ENCODE measurements at regions of chr9 and their contacts with region 1.

Region 1: DNA sequence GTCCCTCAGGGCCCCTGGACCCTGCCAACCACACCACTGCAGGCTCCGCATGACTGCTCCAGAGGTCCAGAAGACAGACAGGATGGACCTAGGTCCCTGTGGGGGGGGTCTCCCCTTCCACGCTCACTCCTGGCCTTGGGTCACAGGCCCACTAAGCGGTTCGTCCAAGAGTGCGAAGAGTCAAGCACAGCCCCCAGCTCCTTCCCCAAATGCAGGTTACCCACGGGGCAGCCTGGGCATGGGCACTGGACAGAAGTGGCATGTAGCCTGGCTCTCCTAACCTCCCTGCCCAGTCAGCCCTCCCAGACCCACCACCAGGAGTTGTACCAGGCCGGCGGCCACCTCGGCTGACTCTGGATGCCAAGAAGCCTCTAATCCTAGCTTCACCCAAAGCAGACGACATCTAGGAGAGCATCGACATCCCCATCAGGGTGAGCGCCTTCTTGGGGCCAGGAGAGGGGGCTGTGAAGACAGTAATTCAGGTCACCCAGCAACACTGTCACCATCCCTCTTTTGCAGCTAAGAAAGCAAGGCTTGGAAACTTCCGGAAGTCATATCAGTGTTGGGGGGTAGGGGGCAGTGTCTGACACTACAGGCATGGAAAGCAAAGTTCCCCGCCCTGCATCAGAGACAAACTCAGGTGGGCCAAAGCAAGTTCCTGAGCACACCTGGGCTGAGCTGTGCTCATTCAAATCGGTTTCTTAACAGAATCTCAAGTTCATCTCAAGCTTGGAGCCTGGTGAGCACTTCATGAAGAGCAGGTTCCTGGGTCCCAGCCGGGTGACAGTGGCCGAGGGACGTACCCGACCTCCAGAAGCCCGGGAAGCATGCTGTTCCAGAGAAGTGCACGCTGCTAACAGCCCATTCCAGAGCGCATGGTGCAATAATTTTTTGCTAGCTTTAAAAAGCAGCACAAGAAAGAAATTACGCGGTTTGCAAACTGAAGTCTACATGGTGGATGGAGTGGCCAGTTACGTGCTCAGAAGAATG is 68.7 kb downstream of the SEMA4D start:
- DNase-seq: peak; percentile 76
- H3K4me3 Mint-ChIP-seq: no peak overlapping the region
- H3K27ac Mint-ChIP-seq: peak overlapping the region; percentile 100
- H3K4me1 Mint-ChIP-seq: peaks cover 87% of the 10 kb centered on the region
- H3K27me3 Mint-ChIP-seq: no peaks in the 10 kb centered on the region

Region 2: DNA sequence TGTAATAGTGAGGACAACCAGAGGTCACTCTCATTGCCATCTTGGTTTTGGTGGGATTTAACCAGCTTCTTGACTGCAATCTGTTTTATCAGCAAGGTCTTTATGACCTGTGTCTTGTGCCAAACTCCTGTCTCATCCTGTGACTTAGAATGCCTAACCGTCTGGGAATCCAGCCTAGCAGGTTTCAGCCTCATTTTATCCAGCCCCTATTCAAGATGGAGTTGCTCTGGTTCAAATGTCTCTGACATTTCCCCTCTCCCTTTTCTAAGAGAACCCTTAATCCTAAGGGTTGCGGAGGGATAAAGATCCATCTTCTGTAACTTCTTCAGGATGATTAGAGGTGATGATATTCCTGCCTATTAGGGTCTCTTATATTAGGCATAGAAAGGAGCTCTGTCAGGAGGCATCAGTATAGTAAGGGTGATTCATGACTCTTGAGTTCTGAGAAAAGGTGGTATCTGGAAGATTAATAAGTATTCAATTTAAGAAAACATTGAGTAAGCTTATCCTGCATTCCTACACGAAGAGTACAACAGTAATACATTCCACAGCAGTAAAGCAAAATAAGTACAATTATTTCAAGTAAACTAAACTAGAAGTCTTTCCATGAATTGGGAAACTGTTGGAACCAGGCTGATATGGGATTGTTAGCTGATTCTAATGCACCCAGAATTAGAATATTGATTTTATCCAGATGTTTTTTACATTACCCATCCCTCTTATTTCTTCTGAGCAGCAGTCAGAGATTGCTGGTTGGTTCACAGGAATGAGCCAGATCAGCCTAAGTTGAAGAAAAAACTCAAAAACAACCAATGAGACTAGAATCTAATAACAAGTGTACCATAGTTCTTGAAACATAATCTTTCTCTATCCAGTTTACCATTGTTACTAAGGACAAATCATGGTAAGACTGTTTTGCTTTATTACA is 290.5 kb before region 1 on chr9:
- CTCF ChIA-PET with region 1: no interaction called
- POLR2A ChIA-PET with region 1: no interaction called
- intact Hi-C with region 1: no loop called
- DNase-seq: no peak
- H3K4me3 Mint-ChIP-seq: no peak overlapping the region
- H3K27ac Mint-ChIP-seq: no peak overlapping the region
- H3K4me1 Mint-ChIP-seq: no peaks in the 10 kb centered on the region
- H3K27me3 Mint-ChIP-seq: peaks cover 3% of the 10 kb centered on the region

Region 3: GRCh38 chr9:89418882-89419640 is 10.1 kb before region 1 on chr9:
- CTCF ChIA-PET with region 1: interaction called, 22 read pairs
- POLR2A ChIA-PET with region 1: interaction called, 11 read pairs
- intact Hi-C with region 1: no loop called
- DNase-seq: peak; percentile 87
- H3K4me3 Mint-ChIP-seq: peak overlapping the region; percentile 58
- H3K27ac Mint-ChIP-seq: peak overlapping the region; percentile 100
- H3K4me1 Mint-ChIP-seq: peaks cover 92% of the 10 kb centered on the region
- H3K27me3 Mint-ChIP-seq: no peaks in the 10 kb centered on the region

Region 4: GRCh38 chr9:89448381-89448780 is 19.2 kb after region 1 on chr9:
- CTCF ChIA-PET with region 1: interaction called, 16 read pairs
- POLR2A ChIA-PET with region 1: interaction called, 9 read pairs
- intact Hi-C with region 1: no loop called
- DNase-seq: peak; percentile 69
- H3K4me3 Mint-ChIP-seq: peak overlapping the region; percentile 17
- H3K27ac Mint-ChIP-seq: peak overlapping the region; percentile 68
- H3K4me1 Mint-ChIP-seq: peaks cover 93% of the 10 kb centered on the region
- H3K27me3 Mint-ChIP-seq: no peaks in the 10 kb centered on the region

Region 5: GRCh38 chr9:89466451-89467277 is 37.5 kb after region 1 on chr9:
- CTCF ChIA-PET with region 1: interaction called, 10 read pairs
- POLR2A ChIA-PET with region 1: interaction called, 11 read pairs
- intact Hi-C with region 1: loop called (anchors 1 kb)
- DNase-seq: peak; percentile 82
- H3K4me3 Mint-ChIP-seq: peak overlapping the region; percentile 55
- H3K27ac Mint-ChIP-seq: peak overlapping the region; percentile 95
- H3K4me1 Mint-ChIP-seq: peaks cover 97% of the 10 kb centered on the region
- H3K27me3 Mint-ChIP-seq: no peaks in the 10 kb centered on the region

Region 6: DNA sequence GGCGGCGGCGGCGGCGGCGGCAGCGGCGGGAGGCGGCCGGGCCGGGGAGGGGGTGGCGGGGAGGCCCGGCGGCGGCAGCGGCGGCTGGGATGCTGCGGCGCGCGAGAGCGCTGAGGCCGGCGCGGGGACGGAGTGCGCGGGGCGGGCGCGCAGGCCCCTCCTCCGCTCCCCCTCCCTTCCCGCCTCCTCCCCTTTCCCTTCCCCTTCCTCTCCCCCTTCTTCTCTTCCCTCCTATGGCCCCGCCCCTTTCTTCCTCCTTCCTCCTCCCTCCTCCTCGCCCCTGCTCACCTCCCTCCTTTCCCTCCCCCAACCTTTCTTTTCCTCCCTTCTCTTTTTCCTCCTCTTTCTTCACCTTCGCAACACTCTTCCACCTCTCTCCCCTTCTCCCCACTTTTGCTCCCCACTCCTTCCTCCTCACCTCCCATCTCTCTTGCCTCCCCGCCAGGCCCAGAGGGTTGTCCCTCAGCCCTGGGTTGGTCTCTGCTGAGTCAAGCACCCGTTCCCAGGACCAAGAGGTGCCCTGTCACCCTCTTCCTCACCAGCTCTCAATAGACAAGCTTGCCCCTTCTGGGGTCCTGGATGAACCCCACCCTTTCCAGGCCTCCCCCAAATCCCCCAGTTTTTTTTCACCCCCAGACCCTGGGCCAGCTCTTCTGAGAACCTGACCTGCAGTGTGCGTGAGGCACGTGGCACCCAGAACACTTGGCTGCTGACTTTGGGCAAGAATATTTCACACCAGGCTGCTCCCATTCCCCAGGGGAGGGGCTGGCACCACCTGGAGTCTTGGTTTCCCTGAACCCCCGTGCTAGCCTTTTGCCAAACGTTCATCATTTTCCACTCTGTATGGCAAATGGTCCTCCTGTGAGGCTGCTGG is 69.0 kb after region 1 on chr9 and contains the start of gene SEMA4D:
- CTCF ChIA-PET with region 1: interaction called, 11 read pairs
- POLR2A ChIA-PET with region 1: no interaction called
- intact Hi-C with region 1: no loop called
- DNase-seq: peak; percentile 81
- H3K4me3 Mint-ChIP-seq: peak within 1 kb of the TSS; percentile 81
- H3K27ac Mint-ChIP-seq: peak within 1 kb of the TSS; percentile 90
- H3K4me1 Mint-ChIP-seq: peaks cover 73% of the 10 kb centered on the region
- H3K27me3 Mint-ChIP-seq: no peaks in the 10 kb centered on the region
- total RNA-seq, gene SEMA4D: 159 to 161 TPM

Region 7: DNA sequence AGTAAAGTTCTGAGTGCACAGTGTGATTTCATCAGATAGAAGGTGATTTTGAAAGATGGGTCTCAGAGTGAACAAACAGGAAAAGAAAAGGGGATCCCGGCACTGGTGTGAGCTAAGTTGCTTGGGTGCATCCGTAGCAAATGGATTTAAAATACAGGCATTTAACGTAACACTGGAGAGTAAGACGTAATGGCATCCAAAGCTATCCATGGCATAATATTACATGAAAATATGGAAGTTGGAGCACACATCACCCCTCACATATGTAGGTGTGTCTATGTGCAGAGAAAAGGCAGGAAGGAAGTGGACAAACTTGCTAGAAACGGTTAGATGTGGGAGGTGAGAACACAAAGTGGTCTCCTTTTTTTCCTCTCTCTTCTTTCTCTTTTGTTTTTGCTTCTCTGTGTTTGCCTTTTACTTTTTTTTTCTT is 107.0 kb after region 1 on chr9:
- CTCF ChIA-PET with region 1: interaction called, 7 read pairs
- POLR2A ChIA-PET with region 1: no interaction called
- intact Hi-C with region 1: loop called (anchors 2 kb)
- DNase-seq: no peak
- H3K4me3 Mint-ChIP-seq: peak overlapping the region; percentile 61
- H3K27ac Mint-ChIP-seq: peak overlapping the region; percentile 90
- H3K4me1 Mint-ChIP-seq: peaks cover 81% of the 10 kb centered on the region
- H3K27me3 Mint-ChIP-seq: no peaks in the 10 kb centered on the region

Region 8: DNA sequence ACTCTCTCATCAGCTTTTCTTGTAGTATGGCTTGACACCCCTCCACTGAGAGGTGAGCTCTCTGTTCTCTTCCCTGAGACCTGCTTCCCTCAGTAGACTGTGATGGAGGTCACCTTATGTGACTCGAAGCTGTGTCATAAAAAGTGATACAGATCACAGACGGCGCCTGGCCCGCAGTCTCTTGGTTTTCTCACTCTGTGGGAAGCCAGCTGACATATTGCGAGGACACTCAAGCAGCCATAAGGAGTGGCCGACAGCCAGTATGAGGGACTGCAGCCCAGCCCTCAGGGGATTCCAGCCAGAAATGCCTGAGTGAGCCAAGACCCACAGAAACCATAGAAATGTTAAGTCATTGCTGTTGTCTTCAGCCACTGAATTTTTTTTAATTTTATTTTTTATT is 213.6 kb after region 1 on chr9:
- CTCF ChIA-PET with region 1: no interaction called
- POLR2A ChIA-PET with region 1: no interaction called
- intact Hi-C with region 1: no loop called
- DNase-seq: no peak
- H3K4me3 Mint-ChIP-seq: no peak overlapping the region
- H3K27ac Mint-ChIP-seq: no peak overlapping the region
- H3K4me1 Mint-ChIP-seq: no peaks in the 10 kb centered on the region
- H3K27me3 Mint-ChIP-seq: peaks cover 3% of the 10 kb centered on the region

Measured in activated CD4-positive, alpha-beta memory T cell treated with anti-CD3 and anti-CD28 coated beads for 36 hours (primary cell).